IMR-90 (cell line): ENCODE measurements at regions of chr20 and their contacts with region 1.

Region 1: GRCh38 chr20:34704177-34705007 is at the start of gene TP53INP2:
- DNase-seq: peak; percentile 91
- ATAC-seq: peak; percentile 76
- H3K4me3 ChIP-seq: peak within 1 kb of the TSS; percentile 69
- H3K27ac ChIP-seq: peak within 1 kb of the TSS; percentile 56
- H3K4me1 ChIP-seq: peaks cover 8% of the 10 kb centered on the region
- H3K27me3 ChIP-seq: no peaks in the 10 kb centered on the region
- CTCF ChIP-seq: no peak
- POLR2A ChIP-seq: peak; percentile 96
- RAD21 ChIP-seq: no peak
- total RNA-seq, gene TP53INP2: 1.1 and 1.3 TPM in 2 replicates

Region 2: DNA sequence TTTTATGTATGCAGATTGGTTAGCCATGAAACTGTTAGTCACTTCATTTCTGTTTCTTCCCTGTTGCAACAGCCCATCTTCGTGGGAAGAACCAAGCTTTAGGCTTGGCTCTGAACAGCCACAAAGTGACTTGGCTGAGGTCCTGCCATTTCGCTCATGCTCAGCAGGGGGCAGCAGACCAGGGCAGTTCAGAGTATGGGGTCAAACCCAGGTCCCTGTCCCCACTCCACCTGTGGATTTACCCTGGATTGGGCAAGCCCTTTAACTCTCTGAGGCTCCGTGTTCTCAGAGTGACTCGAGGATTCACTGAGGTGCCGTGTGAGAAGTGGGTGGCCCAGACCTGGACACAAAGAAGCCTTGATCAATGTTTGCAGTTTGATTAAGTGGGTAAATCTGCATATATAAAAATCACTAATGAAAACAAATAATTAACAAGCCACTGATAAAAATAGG is 165.7 kb before region 1 on chr20:
- CTCF ChIA-PET with region 1: interaction called, 5 read pairs
- POLR2A ChIA-PET with region 1: no interaction called
- dilution Hi-C with region 1: no loop called
- in situ Hi-C with region 1: no loop called
- intact Hi-C with region 1: loop called (anchors 5 kb)
- DNase-seq: peak; percentile 57
- ATAC-seq: peak; percentile 91
- H3K4me3 ChIP-seq: no peak overlapping the region
- H3K27ac ChIP-seq: no peak overlapping the region
- H3K4me1 ChIP-seq: no peaks in the 10 kb centered on the region
- H3K27me3 ChIP-seq: no peaks in the 10 kb centered on the region
- CTCF ChIP-seq: peak; percentile 65
- POLR2A ChIP-seq: no peak
- RAD21 ChIP-seq: peak; percentile 55

Region 3: GRCh38 chr20:34558320-34559218 is 145.8 kb before region 1 on chr20 and contains the start of gene MAP1LC3A:
- CTCF ChIA-PET with region 1: no interaction called
- POLR2A ChIA-PET with region 1: no interaction called
- dilution Hi-C with region 1: no loop called
- in situ Hi-C with region 1: no loop called
- intact Hi-C with region 1: loop called (anchors 5 kb)
- DNase-seq: peak; percentile 95
- ATAC-seq: peak; percentile 92
- H3K4me3 ChIP-seq: peak within 1 kb of the TSS; percentile 76
- H3K27ac ChIP-seq: peak within 1 kb of the TSS; percentile 35
- H3K4me1 ChIP-seq: peaks cover 2% of the 10 kb centered on the region; the same call in 1 of the 2 replicates
- H3K27me3 ChIP-seq: no peaks in the 10 kb centered on the region
- CTCF ChIP-seq: no peak
- POLR2A ChIP-seq: peak; percentile 76
- RAD21 ChIP-seq: no peak
- total RNA-seq, gene MAP1LC3A: 10.0 and 12.5 TPM in 2 replicates